ENCODE measurements at regions of chr7 and their contacts with region 1.

Region 1: DNA sequence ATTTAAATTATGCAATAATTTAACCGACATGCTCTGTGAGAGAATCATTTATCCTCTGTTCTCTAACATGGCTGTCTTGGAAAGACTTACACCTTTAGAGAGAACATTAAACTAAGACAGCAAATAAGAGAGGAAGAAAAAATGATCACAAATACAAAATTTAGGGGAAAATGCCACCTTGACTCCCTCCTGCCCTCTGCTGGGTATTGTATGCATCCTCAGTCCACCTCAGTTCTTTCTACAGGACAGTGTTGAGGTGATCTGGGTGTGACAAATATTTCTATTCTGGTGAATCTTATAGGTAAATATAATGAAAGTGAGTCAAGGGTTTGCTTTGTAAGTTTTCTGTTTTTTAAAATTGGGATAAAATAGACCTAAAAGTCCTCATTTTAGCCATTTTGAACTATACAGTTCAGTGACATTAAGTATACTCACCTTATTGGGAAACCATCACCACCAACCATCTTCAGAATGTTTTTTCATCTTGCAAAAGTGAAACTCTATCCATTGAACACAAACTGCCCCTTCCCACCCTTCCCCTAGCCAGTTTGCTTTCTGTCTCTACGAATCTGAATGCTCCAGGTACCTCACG is 61.5 kb upstream of the ELMO1 start:
- DNase-seq: peak in 4 of 5 donors; percentile 17 to 33 (median 31)
- H3K4me3 ChIP-seq: no peak overlapping the region
- H3K4me3 Mint-ChIP-seq: no peak overlapping the region
- H3K27ac ChIP-seq: no peak overlapping the region
- H3K27ac Mint-ChIP-seq: no peak overlapping the region
- H3K4me1 ChIP-seq: no peaks in the 10 kb centered on the region
- H3K4me1 Mint-ChIP-seq: no peaks in the 10 kb centered on the region
- H3K27me3 ChIP-seq: no peaks in the 10 kb centered on the region
- H3K27me3 Mint-ChIP-seq: peaks cover 12 to 20% of the 10 kb centered on the region in 2 donors

Region 2: GRCh38 chr7:37208528-37208927 is 301.6 kb before region 1 on chr7:
- CTCF ChIA-PET with region 1: no interaction called
- POLR2A ChIA-PET with region 1: no interaction called
- intact Hi-C with region 1: loop called (anchors 1 kb)
- DNase-seq: peak in 4 of 5 donors; percentile 15 to 38 (median 32)
- H3K4me3 ChIP-seq: no peak overlapping the region
- H3K4me3 Mint-ChIP-seq: no peak overlapping the region
- H3K27ac ChIP-seq: no peak overlapping the region
- H3K27ac Mint-ChIP-seq: peak overlapping the region; percentile 22 to 84 (median 64)
- H3K4me1 ChIP-seq: no peaks in the 10 kb centered on the region
- H3K4me1 Mint-ChIP-seq: peaks cover 0 to 3% (median under 1%) of the 10 kb centered on the region in 4 donors
- H3K27me3 ChIP-seq: no peaks in the 10 kb centered on the region
- H3K27me3 Mint-ChIP-seq: no peaks in the 10 kb centered on the region